Naive thymus-derived CD4-positive, alpha-beta T cell (primary cell): ENCODE measurements at regions of chr5 and their contacts with region 1.

Region 1: DNA sequence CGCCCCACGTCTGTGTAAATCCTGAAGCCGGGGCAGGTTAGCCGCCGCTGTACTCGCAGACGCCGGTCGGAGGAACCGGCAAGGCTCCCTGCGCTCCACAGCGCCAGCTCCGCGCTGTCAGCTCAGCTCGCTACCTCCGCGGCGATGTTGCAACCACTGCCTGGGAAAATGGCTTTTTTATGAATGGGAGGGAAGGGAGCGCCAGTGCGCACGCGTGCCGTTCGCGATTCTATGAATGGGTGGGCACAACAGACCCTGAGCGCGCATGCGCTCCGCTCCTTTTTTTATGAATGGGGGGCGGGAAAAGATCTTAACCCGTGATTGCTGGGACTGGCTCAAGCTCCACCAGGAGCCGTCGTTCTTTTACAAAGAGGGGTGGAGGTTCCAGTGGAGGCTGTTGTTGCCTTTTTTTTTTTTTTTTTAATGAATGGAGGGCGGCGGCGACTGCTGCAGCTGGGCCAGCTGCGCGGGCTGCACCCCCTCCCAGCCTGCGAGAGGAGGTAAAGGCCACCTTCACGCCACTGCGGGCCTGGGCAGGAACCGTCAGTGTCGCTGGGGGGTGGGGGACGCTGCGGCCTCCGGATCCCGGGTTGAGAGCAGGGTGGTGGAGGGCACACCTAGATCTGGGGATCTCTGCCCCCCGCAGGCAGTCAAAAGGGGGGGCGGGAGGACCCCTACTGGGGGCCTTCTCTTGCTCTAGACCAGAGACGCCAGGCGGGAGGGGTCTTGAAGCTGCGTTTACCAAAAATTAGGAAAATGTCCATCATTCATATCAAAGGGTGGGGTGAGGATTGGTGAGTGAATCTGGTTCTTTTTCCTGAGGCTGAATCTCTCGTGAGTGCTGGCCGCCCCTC is at the start of gene SPRY4:
- DNase-seq: peak; percentile 35 to 86 (median 82)
- ATAC-seq: peak; percentile 82
- H3K4me3 ChIP-seq: peak within 1 kb of the TSS; percentile 62
- H3K4me3 Mint-ChIP-seq: peak within 1 kb of the TSS; percentile 85 to 93 (median 88)
- H3K27ac ChIP-seq: no peak within 1 kb of the TSS
- H3K27ac Mint-ChIP-seq: peak within 1 kb of the TSS in 3 of 9 donors; percentile 48 to 62 (median 53)
- H3K4me1 ChIP-seq: peaks cover 20 to 25% of the 10 kb centered on the region in 2 donors
- H3K4me1 Mint-ChIP-seq: peaks cover 19 to 41% (median 32%) of the 10 kb centered on the region in 7 donors
- H3K27me3 ChIP-seq: peaks cover 3 to 24% of the 10 kb centered on the region in 2 donors
- H3K27me3 Mint-ChIP-seq: peaks cover 57 to 69% (median 66%) of the 10 kb centered on the region in 5 donors
- total RNA-seq, gene SPRY4: 0.08 to 0.34 (median 0.11) TPM in 3 of 5 experiments, not detected in the others

Region 2: DNA sequence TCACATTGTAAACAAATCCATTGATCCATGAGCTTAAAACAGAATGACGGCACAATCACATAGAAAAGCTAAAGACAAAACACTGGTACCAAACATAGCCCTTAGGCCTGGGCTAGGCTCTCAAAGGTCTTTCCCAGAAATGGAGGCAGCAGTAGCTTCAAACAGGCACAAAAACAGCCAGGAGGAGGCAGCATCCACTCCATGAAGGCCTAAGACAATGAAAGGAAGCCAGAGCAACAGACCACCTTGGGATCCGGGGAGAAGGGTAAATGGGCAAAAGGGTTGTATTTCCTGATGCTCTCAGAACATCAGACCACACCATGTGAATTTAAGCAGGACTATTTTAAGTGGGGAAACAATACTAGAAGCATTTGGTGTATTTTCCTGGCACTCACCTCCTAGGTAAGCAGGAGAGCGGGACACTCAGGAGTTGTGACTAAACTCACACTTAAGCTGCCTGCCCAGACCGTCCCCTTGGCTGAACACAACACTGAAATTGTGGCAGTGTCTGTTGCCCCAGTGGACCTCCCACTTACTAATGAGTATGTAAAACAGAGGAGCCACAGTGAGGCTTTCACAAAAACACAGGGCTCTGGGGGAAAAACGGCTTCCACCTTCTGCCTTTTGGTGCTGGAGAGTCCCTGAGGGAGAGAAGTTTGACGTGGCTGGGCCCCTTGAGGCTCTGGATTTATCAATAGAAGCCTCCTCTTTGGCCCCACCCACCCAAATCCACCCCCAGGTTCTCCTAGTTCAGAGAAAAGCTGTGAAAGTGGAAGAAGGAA is 324.2 kb before region 1 on chr5:
- CTCF ChIA-PET with region 1: no interaction called
- POLR2A ChIA-PET with region 1: no interaction called
- intact Hi-C with region 1: loop called in 1 of 2 experiments (anchors 10 kb)
- DNase-seq: no peak
- ATAC-seq: no peak
- H3K4me3 ChIP-seq: no peak overlapping the region
- H3K4me3 Mint-ChIP-seq: no peak overlapping the region
- H3K27ac ChIP-seq: no peak overlapping the region
- H3K27ac Mint-ChIP-seq: peak overlapping the region in 7 of 9 donors; percentile 3 to 77 (median 19)
- H3K4me1 ChIP-seq: peaks cover 0 to 27% of the 10 kb centered on the region in 2 donors
- H3K4me1 Mint-ChIP-seq: peaks cover 19 to 47% (median 29%) of the 10 kb centered on the region in 7 donors
- H3K27me3 ChIP-seq: no peaks in the 10 kb centered on the region
- H3K27me3 Mint-ChIP-seq: no peaks in the 10 kb centered on the region

Region 3: GRCh38 chr5:142221091-142221860 is 103.8 kb before region 1 on chr5:
- CTCF ChIA-PET with region 1: no interaction called
- POLR2A ChIA-PET with region 1: no interaction called
- intact Hi-C with region 1: loop called in 1 of 2 experiments (anchors 5 kb)
- DNase-seq: no peak
- ATAC-seq: no peak
- H3K4me3 ChIP-seq: no peak overlapping the region
- H3K4me3 Mint-ChIP-seq: peak overlapping the region in 3 of 10 donors; percentile 17 to 31 (median 19)
- H3K27ac ChIP-seq: no peak overlapping the region
- H3K27ac Mint-ChIP-seq: peak overlapping the region in 3 of 9 donors; percentile 3 to 52 (median 6)
- H3K4me1 ChIP-seq: peaks cover 6 to 25% of the 10 kb centered on the region in 2 donors
- H3K4me1 Mint-ChIP-seq: peaks cover 18 to 39% (median 34%) of the 10 kb centered on the region in 7 donors
- H3K27me3 ChIP-seq: no peaks in the 10 kb centered on the region
- H3K27me3 Mint-ChIP-seq: peaks cover 0 to 10% (median 0%) of the 10 kb centered on the region in 5 donors

Region 4: DNA sequence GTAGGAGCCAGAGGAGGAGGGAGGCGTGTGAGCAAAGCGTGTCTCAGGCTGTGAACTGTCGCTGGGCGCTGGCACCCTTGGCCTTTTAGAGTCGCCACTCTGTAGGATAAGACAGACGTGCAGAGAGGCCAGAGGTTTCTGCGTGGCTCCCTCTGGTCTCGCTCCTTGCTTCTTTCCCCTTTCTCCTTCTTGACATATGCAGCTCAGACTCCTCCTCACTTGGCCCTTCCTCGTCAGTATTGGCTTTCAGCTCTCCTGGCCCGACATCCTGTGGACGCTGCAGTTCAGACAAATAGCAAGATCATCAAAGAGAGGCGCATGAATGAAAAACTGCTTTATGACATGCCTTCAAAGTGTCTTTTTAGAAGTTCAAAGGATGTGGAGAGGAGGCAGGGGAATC is 116.5 kb after region 1 on chr5:
- CTCF ChIA-PET with region 1: no interaction called
- POLR2A ChIA-PET with region 1: no interaction called
- intact Hi-C with region 1: loop called in 1 of 2 experiments (anchors 5 kb)
- DNase-seq: peak in 7 of 9 donors; percentile 11 to 48 (median 31)
- ATAC-seq: peak; percentile 42
- H3K4me3 ChIP-seq: no peak overlapping the region
- H3K4me3 Mint-ChIP-seq: peak overlapping the region; percentile 0 to 58 (median 43)
- H3K27ac ChIP-seq: no peak overlapping the region
- H3K27ac Mint-ChIP-seq: peak overlapping the region in 1 of 9 donors; percentile 1
- H3K4me1 ChIP-seq: peaks cover 0 to 12% of the 10 kb centered on the region in 2 donors
- H3K4me1 Mint-ChIP-seq: peaks cover 14 to 34% (median 23%) of the 10 kb centered on the region in 7 donors
- H3K27me3 ChIP-seq: no peaks in the 10 kb centered on the region
- H3K27me3 Mint-ChIP-seq: peaks cover 0 to 13% (median 0%) of the 10 kb centered on the region in 5 donors

Region 5: GRCh38 chr5:142548739-142549275 is 223.7 kb after region 1 on chr5:
- CTCF ChIA-PET with region 1: interaction called, 3 read pairs
- POLR2A ChIA-PET with region 1: no interaction called
- intact Hi-C with region 1: loop called in 1 of 2 experiments (anchors 10 kb)
- DNase-seq: peak in 5 of 9 donors; percentile 2 to 33 (median 20)
- ATAC-seq: peak; percentile 48
- H3K4me3 ChIP-seq: no peak overlapping the region
- H3K4me3 Mint-ChIP-seq: no peak overlapping the region
- H3K27ac ChIP-seq: no peak overlapping the region
- H3K27ac Mint-ChIP-seq: no peak overlapping the region
- H3K4me1 ChIP-seq: no peaks in the 10 kb centered on the region
- H3K4me1 Mint-ChIP-seq: peaks cover 0 to 20% (median 9%) of the 10 kb centered on the region in 7 donors
- H3K27me3 ChIP-seq: peaks cover 2 to 10% of the 10 kb centered on the region in 2 donors
- H3K27me3 Mint-ChIP-seq: peaks cover 17 to 51% (median 25%) of the 10 kb centered on the region in 5 donors